ENCODE measurements at regions of chr3 and their contacts with region 1.

Region 1: GRCh38 chr3:127574880-127575878 is 15.4 kb downstream of the TPRA1 start:
- DNase-seq: peak; percentile 46
- ATAC-seq: peak; percentile 78
- H3K4me3 ChIP-seq: no peak overlapping the region
- H3K27ac ChIP-seq: no peak overlapping the region
- H3K4me1 ChIP-seq: no peaks in the 10 kb centered on the region
- H3K27me3 ChIP-seq: no peaks in the 10 kb centered on the region
- CTCF ChIP-seq: peak; percentile 91
- EP300 ChIP-seq: no peak
- POLR2A ChIP-seq: no peak
- RAD21 ChIP-seq: peak; percentile 61; the same call in 1 of the 2 replicates

Region 2: DNA sequence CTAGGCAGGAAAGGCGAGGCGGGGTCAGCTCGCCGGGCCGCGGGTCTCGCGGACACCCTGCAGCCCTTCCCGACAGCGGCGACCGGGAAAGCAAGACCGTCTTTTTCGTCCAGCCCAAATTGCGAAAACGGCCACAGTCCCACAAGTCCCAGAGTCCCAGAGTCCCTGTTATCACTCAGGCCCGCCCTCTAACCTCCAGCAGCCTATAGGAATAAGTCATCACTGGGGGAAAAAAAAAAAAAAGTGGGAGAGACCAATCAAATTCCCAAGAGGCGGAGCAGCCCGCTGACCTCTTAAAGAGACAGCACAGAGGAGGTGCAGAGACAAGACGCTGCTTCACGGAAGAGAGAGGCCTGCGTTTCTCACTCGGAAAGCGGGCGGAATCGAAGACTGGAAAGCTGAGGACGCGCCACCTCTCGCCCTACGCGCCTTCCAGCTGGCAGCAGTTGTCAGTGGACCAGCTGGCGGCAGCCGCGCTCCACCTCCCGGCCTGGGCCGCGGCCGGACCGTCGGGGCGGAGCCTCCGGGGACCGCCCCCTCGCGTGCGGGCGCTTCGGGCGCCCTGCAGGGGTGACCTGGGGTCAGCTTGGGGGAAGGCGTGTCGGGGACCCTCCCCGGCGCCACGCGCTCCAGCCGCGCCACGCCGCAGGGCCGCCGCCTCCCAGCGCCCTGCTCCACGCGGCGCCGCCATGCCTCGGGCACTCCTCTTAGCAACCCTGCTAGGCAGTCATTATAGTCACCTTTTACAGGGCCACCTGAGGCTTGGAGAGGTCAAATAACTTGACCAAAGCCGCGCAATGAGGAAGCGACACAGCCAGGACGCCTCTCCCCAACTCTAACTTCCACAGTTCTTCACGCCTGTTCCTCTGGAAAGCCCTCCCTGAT is 15.7 kb after region 1 on chr3 and contains the start of gene TPRA1:
- CTCF ChIA-PET with region 1: no interaction called
- POLR2A ChIA-PET with region 1: interaction called, 3 read pairs
- in situ Hi-C with region 1: no loop called
- intact Hi-C with region 1: loop called (anchors 1 kb)
- DNase-seq: peak; percentile 98
- ATAC-seq: peak; percentile 88
- H3K4me3 ChIP-seq: peak within 1 kb of the TSS; percentile 93 to 97 (median 94)
- H3K27ac ChIP-seq: peak within 1 kb of the TSS; percentile 85
- H3K4me1 ChIP-seq: peaks cover 35% of the 10 kb centered on the region
- H3K27me3 ChIP-seq: no peaks in the 10 kb centered on the region; a peak in 1 of 5 replicates
- CTCF ChIP-seq: peak; percentile 65
- EP300 ChIP-seq: peak; percentile 30 to 76; a peak in 2 of 4 replicates
- POLR2A ChIP-seq: peak in 1 of 2 experiments; percentile 86; a peak in 2 of 4 replicates
- RAD21 ChIP-seq: peak; percentile 45
- total RNA-seq, gene TPRA1: 16.0 and 25.8 TPM in 2 replicates

Region 3: DNA sequence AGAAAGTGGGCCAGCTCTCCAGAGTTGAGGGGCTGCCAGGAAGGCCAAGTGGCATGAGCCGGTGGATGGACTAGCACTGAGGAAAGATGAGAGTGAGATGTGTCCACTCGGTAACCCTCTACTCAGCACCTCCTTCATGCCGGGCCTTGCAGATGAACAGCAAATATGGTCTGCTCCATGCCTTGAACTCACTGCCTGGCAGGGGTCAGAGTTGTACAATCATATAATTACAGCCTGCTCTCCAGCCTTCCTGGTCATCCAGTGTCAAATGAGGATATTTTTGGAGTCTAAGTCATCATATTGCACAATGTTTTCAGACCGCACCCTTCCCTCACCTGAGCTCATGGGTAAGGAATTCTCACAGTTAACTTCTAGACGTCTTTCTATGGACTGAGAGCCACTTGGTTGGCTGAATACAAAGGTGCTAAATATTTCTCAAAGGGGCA is 242.2 kb after region 1 on chr3:
- CTCF ChIA-PET with region 1: no interaction called
- POLR2A ChIA-PET with region 1: no interaction called
- in situ Hi-C with region 1: loop called (anchors 10 kb)
- intact Hi-C with region 1: no loop called
- DNase-seq: no peak
- ATAC-seq: no peak
- H3K4me3 ChIP-seq: no peak overlapping the region
- H3K27ac ChIP-seq: no peak overlapping the region
- H3K4me1 ChIP-seq: peaks cover 10% of the 10 kb centered on the region; the same call in 1 of the 2 replicates
- H3K27me3 ChIP-seq: peaks cover 0 to 24% of the 10 kb centered on the region in 2 experiments; a peak in 2 of 5 replicates
- CTCF ChIP-seq: no peak
- EP300 ChIP-seq: no peak
- POLR2A ChIP-seq: no peak
- RAD21 ChIP-seq: no peak